Ascending aorta (tissue), 2 donors: ENCODE measurements at regions of chr12 and their contacts with region 1.

Region 1: DNA sequence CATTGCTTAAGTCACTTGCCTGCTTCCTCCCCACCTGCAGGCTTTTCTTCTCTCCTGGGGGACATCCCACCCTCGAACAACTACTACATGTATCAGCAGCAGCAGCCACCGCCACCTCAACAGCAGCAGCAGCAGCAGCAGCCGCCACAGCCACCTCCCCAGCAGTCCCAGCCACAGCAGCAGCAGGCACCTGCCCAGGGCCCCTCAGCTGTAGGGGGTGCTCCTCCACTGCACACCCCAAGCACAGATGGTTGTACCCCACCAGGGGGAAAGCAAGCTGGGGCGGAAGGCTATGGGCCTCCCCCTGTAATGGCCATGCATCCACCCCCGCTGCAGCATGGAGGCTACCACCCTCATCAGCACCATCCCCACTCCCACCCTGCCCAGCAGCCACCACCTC is 15.3 kb downstream of the FOXJ2 start:
- DNase-seq: no peak
- H3K4me3 ChIP-seq: no peak overlapping the region
- H3K27ac ChIP-seq: no peak overlapping the region
- H3K4me1 ChIP-seq: no peaks in the 10 kb centered on the region
- H3K27me3 ChIP-seq: no peaks in the 10 kb centered on the region
- CTCF ChIP-seq: no peak

Region 2: DNA sequence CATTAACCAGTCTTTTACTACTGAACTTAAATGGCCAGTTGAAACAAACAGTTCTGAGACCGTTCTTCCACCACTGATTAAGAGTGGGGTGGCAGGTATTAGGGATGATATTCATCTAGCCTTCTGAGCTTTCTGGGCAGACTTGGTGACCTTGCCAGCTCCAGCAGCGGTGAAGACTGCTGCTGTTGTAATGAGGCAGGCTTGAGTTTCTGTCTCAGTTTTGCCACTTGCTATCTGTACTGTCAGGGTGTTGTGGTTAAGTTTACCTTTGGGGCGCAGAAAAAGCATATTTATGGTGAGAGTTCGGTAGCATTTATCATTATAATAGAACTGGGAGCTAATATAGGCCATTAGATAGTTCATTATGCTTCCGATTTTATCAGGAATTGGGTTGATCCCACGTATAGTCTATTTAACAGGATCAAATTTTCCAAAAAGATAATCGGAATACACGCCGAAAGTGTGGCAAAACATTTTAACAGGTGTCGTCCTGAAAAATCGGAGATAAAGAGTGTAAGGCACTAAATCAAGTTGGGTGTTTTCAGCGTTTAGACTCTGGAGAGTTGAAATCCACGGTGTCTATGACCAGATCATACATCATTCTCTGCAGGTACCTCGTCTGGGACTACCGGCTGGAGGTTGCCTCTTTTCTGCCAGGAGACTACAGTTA is 33.5 kb after region 1 on chr12:
- intact Hi-C with region 1: loop called (anchors 1 kb)
- DNase-seq: no peak
- H3K4me3 ChIP-seq: peak overlapping the region; percentile 68 to 75
- H3K27ac ChIP-seq: peak overlapping the region; percentile 77 to 92
- H3K4me1 ChIP-seq: peaks cover 0 to 24% of the 10 kb centered on the region in 2 donors
- H3K27me3 ChIP-seq: no peaks in the 10 kb centered on the region
- CTCF ChIP-seq: no peak